ENCODE measurements at regions of chr2 and their contacts with region 1.

Region 1: GRCh38 chr2:197324801-197325200 is 14.2 kb upstream of the ANKRD44 start:
- DNase-seq: no peak
- H3K4me3 Mint-ChIP-seq: no peak overlapping the region
- H3K27ac Mint-ChIP-seq: peak overlapping the region; percentile 78
- H3K4me1 Mint-ChIP-seq: peaks cover 74% of the 10 kb centered on the region
- H3K27me3 Mint-ChIP-seq: no peaks in the 10 kb centered on the region

Region 2: GRCh38 chr2:197248623-197249022 is 76.2 kb before region 1 on chr2:
- CTCF ChIA-PET with region 1: no interaction called
- POLR2A ChIA-PET with region 1: no interaction called
- intact Hi-C with region 1: no loop called
- DNase-seq: peak; percentile 54
- H3K4me3 Mint-ChIP-seq: peak overlapping the region; percentile 3
- H3K27ac Mint-ChIP-seq: peak overlapping the region; percentile 64
- H3K4me1 Mint-ChIP-seq: peaks cover 79% of the 10 kb centered on the region
- H3K27me3 Mint-ChIP-seq: no peaks in the 10 kb centered on the region

Region 3: DNA sequence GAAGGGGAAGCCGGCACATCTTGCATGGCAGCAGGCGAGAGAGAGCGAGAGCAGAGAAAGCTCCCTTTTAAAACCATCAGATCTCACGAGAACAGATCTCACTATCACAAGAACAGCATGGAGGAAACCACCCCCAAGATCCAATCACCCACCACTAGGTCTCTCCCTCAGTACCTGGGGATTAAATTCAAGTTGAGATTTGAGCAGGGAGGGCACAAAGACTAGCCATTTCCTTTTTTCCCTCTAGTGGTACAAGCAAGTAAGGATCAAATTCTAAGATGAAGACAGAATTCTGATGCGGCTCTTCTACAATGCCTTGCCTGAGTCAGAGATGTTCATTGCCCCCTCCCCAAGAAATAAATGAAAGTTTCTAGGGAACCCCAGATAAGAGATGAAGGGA is 31.3 kb after region 1 on chr2:
- CTCF ChIA-PET with region 1: interaction called, 14 read pairs
- POLR2A ChIA-PET with region 1: interaction called, 3 read pairs
- intact Hi-C with region 1: loop called (anchors 1 kb)
- DNase-seq: no peak
- H3K4me3 Mint-ChIP-seq: no peak overlapping the region
- H3K27ac Mint-ChIP-seq: no peak overlapping the region
- H3K4me1 Mint-ChIP-seq: peaks cover 39% of the 10 kb centered on the region
- H3K27me3 Mint-ChIP-seq: no peaks in the 10 kb centered on the region

Measured in activated CD4-positive, alpha-beta memory T cell treated with anti-CD3 and anti-CD28 coated beads for 36 hours (primary cell).